Activated naive CD8-positive, alpha-beta T cell treated with anti-CD3 and anti-CD28 coated beads, Interleukin-2, amount 10 ng/mL, durations not matched to agents 7 days and 5 days (primary cell): ENCODE measurements at regions of chr16 and their contacts with region 1.

Region 1: GRCh38 chr16:87778830-87779579 is 13.2 kb upstream of the KLHDC4 start:
- DNase-seq: peak; percentile 98
- ATAC-seq: peak; percentile 80
- H3K4me3 Mint-ChIP-seq: peak overlapping the region; percentile 76
- H3K27ac Mint-ChIP-seq: peak overlapping the region; percentile 98
- H3K4me1 Mint-ChIP-seq: peaks cover 46% of the 10 kb centered on the region
- H3K27me3 Mint-ChIP-seq: no peaks in the 10 kb centered on the region

Region 2: GRCh38 chr16:87754535-87754934 is 24.5 kb before region 1 on chr16:
- POLR2A ChIA-PET with region 1: no interaction called
- DNase-seq: no peak
- ATAC-seq: no peak
- H3K4me3 Mint-ChIP-seq: no peak overlapping the region
- H3K27ac Mint-ChIP-seq: no peak overlapping the region
- H3K4me1 Mint-ChIP-seq: peaks cover 3% of the 10 kb centered on the region
- H3K27me3 Mint-ChIP-seq: no peaks in the 10 kb centered on the region

Region 3: GRCh38 chr16:87765776-87766484 is 13.1 kb before region 1 on chr16 and contains the start of gene KLHDC4:
- POLR2A ChIA-PET with region 1: interaction called, 39 read pairs
- DNase-seq: peak; percentile 91
- ATAC-seq: peak; percentile 71
- H3K4me3 Mint-ChIP-seq: peak within 1 kb of the TSS; percentile 99
- H3K27ac Mint-ChIP-seq: peak within 1 kb of the TSS; percentile 99
- H3K4me1 Mint-ChIP-seq: peaks cover 29% of the 10 kb centered on the region
- H3K27me3 Mint-ChIP-seq: no peaks in the 10 kb centered on the region
- total RNA-seq, gene KLHDC4: 99.4 to 105 TPM

Region 4: DNA sequence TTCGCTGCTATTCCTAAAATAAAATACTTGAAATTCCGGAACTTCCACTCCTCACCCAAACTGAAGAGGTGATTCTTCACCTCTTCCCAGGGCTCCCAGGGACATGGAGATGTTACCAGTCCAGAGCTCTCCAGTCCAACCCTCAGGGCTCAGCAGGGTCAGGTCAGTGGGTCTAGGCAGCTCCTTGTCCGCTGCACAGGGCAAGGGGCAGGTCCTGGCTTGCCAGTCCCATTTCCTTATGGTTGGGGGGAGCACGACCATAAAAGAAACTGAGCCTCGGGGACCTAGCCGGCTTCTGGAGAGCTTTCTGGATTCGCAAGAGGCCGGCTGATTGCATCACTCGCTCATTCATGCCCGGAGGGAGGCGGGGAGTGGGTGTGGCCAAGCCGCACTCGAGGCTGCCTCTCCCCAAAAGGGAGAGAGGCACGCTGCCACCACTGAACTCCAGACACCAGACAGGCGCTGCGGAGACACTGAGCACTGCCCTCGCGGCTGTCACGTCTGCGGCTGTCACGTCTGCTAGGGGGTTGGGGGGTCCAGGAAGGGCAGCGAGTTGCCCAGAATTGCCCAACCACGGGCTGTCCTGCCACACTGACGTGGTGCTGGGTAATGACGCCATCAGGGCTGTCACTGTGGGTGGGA is 74.5 kb after region 1 on chr16:
- POLR2A ChIA-PET with region 1: interaction called, 23 read pairs
- DNase-seq: peak; percentile 86
- ATAC-seq: peak; percentile 59
- H3K4me3 Mint-ChIP-seq: peak overlapping the region; percentile 63
- H3K27ac Mint-ChIP-seq: peak overlapping the region; percentile 92
- H3K4me1 Mint-ChIP-seq: peaks cover 21% of the 10 kb centered on the region
- H3K27me3 Mint-ChIP-seq: no peaks in the 10 kb centered on the region

Region 5: GRCh38 chr16:87874639-87875465 is 95.8 kb after region 1 on chr16:
- POLR2A ChIA-PET with region 1: interaction called, 191 read pairs
- DNase-seq: no peak
- ATAC-seq: peak; percentile 52
- H3K4me3 Mint-ChIP-seq: peak overlapping the region; percentile 65
- H3K27ac Mint-ChIP-seq: peak overlapping the region; percentile 72
- H3K4me1 Mint-ChIP-seq: peaks cover 32% of the 10 kb centered on the region
- H3K27me3 Mint-ChIP-seq: peaks cover 1% of the 10 kb centered on the region

Region 6: GRCh38 chr16:87950765-87951549 is 172.0 kb after region 1 on chr16 and contains the start of gene BANP:
- POLR2A ChIA-PET with region 1: interaction called, 15 read pairs
- DNase-seq: peak; percentile 98
- ATAC-seq: peak; percentile 95
- H3K4me3 Mint-ChIP-seq: peak within 1 kb of the TSS; percentile 98
- H3K27ac Mint-ChIP-seq: peak within 1 kb of the TSS; percentile 100
- H3K4me1 Mint-ChIP-seq: peaks cover 43% of the 10 kb centered on the region
- H3K27me3 Mint-ChIP-seq: no peaks in the 10 kb centered on the region
- total RNA-seq, gene BANP: 50.2 to 55.1 TPM